ENCODE measurements at regions of chr2 and their contacts with region 1.

Region 1: DNA sequence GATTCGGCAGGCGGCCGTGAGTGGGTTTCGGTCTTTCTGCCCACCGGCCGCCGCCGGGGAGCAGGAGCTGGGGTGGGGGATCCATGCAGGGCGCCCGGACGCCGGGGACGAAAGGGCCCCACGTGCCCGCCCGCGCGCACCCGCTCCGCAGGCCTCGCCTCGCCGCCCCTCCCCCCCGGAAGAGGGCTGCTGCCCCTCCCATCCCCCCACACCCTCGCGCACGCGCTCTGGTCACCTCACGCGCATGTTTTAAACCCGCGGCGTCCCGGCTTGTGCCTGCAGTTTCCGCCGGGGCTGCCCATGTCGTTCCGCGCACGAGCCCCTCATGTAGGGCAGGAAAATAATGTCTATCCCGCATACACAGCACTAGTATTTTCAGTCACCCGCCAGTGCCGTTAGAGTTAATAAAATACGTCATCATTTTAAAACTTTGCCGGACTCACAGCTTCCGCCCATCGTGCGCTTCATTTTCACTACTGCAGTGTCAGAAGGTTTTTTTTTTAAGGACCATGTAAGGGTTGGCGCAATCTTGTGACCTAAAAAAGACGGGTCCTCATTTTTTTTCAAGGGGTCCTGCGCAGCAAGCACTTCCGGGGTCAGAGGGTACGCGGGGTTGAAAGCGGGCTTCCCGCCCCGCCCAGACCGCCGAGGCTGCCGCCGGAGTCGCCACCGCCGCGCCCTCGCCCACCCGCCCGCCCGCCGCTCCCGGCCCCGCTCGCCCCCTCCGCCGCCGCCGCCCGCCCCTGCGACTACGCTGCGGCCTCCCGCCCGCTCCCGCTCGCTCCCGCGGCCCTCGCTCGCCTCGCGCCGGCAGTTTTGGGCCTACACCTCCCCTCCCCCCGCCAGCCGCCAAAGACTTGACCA is at the start of gene PCBP1:
- DNase-seq: peak; percentile 95 to 99 (median 98)
- ATAC-seq: peak; percentile 55
- H3K4me3 ChIP-seq: peak within 1 kb of the TSS; percentile 66
- H3K4me3 Mint-ChIP-seq: peak within 1 kb of the TSS; percentile 92
- H3K27ac ChIP-seq: peak within 1 kb of the TSS; percentile 100
- H3K27ac Mint-ChIP-seq: peak within 1 kb of the TSS; percentile 100
- H3K4me1 ChIP-seq: peaks cover 74% of the 10 kb centered on the region
- H3K4me1 Mint-ChIP-seq: peaks cover 76% of the 10 kb centered on the region
- H3K27me3 ChIP-seq: no peaks in the 10 kb centered on the region
- H3K27me3 Mint-ChIP-seq: peaks cover 4% of the 10 kb centered on the region
- CTCF ChIP-seq: no peak
- total RNA-seq, gene PCBP1: 228 to 233 TPM

Region 2: DNA sequence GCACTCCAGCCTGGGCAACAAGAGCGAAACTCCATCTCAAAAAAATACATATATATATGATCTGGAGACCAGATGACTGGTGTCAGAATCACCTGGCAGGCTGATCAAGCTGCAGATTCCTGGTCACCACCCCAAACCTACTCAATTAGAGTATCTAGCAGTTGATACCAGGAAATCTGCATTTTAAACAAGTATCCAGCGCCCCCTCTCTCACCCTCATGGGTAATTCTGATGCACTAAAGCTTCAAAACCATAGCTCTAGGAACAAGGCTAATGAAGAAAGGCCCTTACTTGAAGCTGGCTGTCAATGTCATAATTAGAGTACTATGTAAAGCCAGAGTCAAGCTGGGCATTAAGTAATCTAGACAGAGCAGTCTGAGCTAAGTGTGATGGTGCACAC is 24.8 kb before region 1 on chr2:
- CTCF ChIA-PET with region 1: no interaction called
- POLR2A ChIA-PET with region 1: interaction called, 235 read pairs
- intact Hi-C with region 1: no loop called
- DNase-seq: no peak
- ATAC-seq: no peak
- H3K4me3 ChIP-seq: no peak overlapping the region
- H3K4me3 Mint-ChIP-seq: no peak overlapping the region
- H3K27ac ChIP-seq: no peak overlapping the region
- H3K27ac Mint-ChIP-seq: no peak overlapping the region
- H3K4me1 ChIP-seq: peaks cover 3% of the 10 kb centered on the region
- H3K4me1 Mint-ChIP-seq: peaks cover 28% of the 10 kb centered on the region
- H3K27me3 ChIP-seq: no peaks in the 10 kb centered on the region
- H3K27me3 Mint-ChIP-seq: no peaks in the 10 kb centered on the region
- CTCF ChIP-seq: no peak

Region 3: GRCh38 chr2:70115646-70116442 is 28.8 kb after region 1 on chr2:
- CTCF ChIA-PET with region 1: no interaction called
- POLR2A ChIA-PET with region 1: interaction called, 657 read pairs
- intact Hi-C with region 1: no loop called
- DNase-seq: peak in 3 of 14 experiments; percentile 47 to 55 (median 54)
- ATAC-seq: peak; percentile 48
- H3K4me3 ChIP-seq: no peak overlapping the region
- H3K4me3 Mint-ChIP-seq: peak overlapping the region; percentile 65
- H3K27ac ChIP-seq: no peak overlapping the region
- H3K27ac Mint-ChIP-seq: peak overlapping the region; percentile 64
- H3K4me1 ChIP-seq: peaks cover 44% of the 10 kb centered on the region
- H3K4me1 Mint-ChIP-seq: peaks cover 62% of the 10 kb centered on the region
- H3K27me3 ChIP-seq: no peaks in the 10 kb centered on the region
- H3K27me3 Mint-ChIP-seq: no peaks in the 10 kb centered on the region
- CTCF ChIP-seq: no peak

Region 4: DNA sequence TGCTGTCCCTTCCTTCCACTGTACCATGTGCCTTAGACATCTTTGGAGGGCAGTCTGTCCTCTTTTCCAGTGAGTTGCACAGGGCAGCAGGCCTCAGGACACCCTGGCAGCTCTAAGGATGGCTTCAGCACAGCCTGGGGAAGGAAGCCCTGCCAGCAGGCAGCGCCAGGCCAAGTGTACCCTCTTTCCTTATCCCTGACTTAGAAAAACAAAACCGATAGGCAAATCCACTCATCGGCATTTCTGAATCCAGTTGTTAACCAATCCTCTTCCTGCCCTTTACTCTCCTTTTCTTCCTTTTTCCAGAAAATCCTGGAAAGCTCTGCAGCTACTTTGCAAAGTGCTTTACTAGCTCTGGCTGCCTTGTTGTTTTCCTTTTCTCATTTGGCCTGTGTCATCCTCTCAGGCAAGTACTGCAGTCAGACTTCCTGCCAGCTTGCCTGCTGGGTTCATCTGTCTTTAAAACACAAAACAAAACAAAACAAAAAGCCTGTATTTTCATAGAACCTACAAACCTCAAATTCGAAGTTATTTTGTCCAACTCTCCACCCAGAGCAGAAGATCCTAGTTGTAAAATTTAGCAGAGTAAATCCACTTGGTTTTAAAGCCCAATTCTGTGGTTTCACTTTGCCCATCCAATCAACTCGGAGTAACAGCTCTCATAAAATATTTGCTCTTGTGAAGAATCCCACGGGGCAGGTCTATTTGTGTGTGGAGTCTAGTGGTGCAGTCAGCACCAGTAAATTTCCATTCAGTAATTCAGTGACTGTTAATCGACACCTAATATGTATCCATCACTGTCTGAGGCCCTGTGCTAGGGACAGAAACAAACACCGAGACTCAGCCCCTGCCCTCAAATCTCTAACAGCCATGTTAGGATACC is 45.4 kb after region 1 on chr2:
- CTCF ChIA-PET with region 1: interaction called, 6 read pairs
- POLR2A ChIA-PET with region 1: interaction called, 932 read pairs
- intact Hi-C with region 1: loop called in 1 of 2 experiments (anchors 2 kb)
- DNase-seq: peak in 8 of 14 experiments; percentile 34 to 80 (median 60)
- ATAC-seq: peak; percentile 62
- H3K4me3 ChIP-seq: peak overlapping the region; percentile 54
- H3K4me3 Mint-ChIP-seq: peak overlapping the region; percentile 83
- H3K27ac ChIP-seq: peak overlapping the region; percentile 76 to 84
- H3K27ac Mint-ChIP-seq: peak overlapping the region; percentile 96
- H3K4me1 ChIP-seq: peaks cover 88% of the 10 kb centered on the region
- H3K4me1 Mint-ChIP-seq: peaks cover 72% of the 10 kb centered on the region
- H3K27me3 ChIP-seq: no peaks in the 10 kb centered on the region
- H3K27me3 Mint-ChIP-seq: no peaks in the 10 kb centered on the region
- CTCF ChIP-seq: no peak

Region 5: DNA sequence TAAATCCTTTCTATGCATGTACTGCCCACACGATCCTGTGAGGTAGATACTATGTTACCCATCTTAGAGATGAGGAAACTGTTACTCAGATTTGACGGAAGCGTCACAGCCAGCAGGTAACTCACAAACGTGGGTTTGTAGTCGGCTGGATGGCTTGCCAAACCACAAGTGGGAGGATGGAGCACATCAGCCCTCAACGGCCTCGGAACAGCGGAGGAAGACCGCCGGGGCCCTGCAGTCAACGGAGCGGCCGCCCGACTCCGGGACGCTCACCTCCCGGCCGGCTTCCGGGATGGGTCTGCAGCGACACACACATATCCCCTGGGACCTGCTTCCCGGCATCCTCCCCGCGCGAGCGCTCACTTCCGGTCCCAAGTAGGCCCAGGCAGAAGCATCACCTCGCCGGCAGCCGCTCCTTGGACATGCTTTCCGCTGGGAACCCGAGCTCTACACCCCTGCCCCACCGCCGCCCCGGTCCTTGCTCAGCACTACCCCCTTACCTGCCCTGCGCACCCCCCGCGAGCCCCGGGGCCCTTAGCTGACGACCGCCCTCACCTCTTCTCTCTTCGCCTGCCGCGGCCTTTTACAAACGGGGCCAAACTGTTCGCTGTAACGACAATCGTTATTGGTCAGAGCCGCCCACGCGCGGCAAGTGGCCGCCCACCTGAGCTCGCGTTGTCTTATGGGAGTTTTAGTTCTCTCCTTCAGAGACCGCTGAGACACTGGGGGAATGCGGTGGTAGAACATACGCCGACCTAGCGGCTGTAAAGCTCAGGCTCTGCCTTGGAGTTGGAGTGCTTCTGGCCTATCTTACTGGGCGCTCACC is 103.6 kb after region 1 on chr2 and contains the start of gene C2orf42:
- CTCF ChIA-PET with region 1: interaction called, 7 read pairs
- POLR2A ChIA-PET with region 1: interaction called, 36 read pairs
- intact Hi-C with region 1: loop called (anchors 2 to 5 kb)
- DNase-seq: peak; percentile 89 to 98 (median 92)
- ATAC-seq: peak; percentile 81
- H3K4me3 ChIP-seq: peak within 1 kb of the TSS; percentile 88
- H3K4me3 Mint-ChIP-seq: peak within 1 kb of the TSS; percentile 91
- H3K27ac ChIP-seq: peak within 1 kb of the TSS; percentile 95 to 98
- H3K27ac Mint-ChIP-seq: peak within 1 kb of the TSS; percentile 95
- H3K4me1 ChIP-seq: peaks cover 7% of the 10 kb centered on the region
- H3K4me1 Mint-ChIP-seq: peaks cover 12% of the 10 kb centered on the region
- H3K27me3 ChIP-seq: no peaks in the 10 kb centered on the region
- H3K27me3 Mint-ChIP-seq: no peaks in the 10 kb centered on the region
- CTCF ChIP-seq: peak; percentile 21
- total RNA-seq, gene C2orf42: 16.9 to 18.4 TPM

Region 6: DNA sequence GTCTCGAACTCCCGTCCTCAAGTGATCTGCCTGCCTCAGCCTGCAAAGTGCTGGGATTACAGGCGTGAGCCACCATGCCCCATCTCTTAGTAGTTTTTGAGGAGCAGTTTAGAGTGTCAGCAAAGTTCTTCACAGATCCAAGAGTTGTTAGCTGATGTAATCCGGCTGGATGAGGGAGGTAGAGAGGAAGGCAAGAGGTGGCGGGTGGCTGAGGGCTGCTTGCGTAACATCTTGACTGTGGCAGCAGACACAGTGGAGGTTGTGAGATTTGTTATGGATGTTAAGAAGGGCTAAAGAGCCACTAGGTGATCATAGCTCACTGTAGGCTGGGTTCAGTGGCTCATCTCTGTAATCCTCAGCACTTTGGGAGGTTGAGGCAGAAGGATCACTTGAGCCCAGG is 234.3 kb after region 1 on chr2:
- CTCF ChIA-PET with region 1: no interaction called
- POLR2A ChIA-PET with region 1: no interaction called
- intact Hi-C with region 1: no loop called
- DNase-seq: no peak
- ATAC-seq: no peak
- H3K4me3 ChIP-seq: no peak overlapping the region
- H3K4me3 Mint-ChIP-seq: no peak overlapping the region
- H3K27ac ChIP-seq: no peak overlapping the region
- H3K27ac Mint-ChIP-seq: no peak overlapping the region
- H3K4me1 ChIP-seq: no peaks in the 10 kb centered on the region
- H3K4me1 Mint-ChIP-seq: no peaks in the 10 kb centered on the region
- H3K27me3 ChIP-seq: no peaks in the 10 kb centered on the region
- H3K27me3 Mint-ChIP-seq: peaks cover 9% of the 10 kb centered on the region
- CTCF ChIP-seq: no peak